ENCODE measurements at regions of chr19 and their contacts with region 1.

Region 1: DNA sequence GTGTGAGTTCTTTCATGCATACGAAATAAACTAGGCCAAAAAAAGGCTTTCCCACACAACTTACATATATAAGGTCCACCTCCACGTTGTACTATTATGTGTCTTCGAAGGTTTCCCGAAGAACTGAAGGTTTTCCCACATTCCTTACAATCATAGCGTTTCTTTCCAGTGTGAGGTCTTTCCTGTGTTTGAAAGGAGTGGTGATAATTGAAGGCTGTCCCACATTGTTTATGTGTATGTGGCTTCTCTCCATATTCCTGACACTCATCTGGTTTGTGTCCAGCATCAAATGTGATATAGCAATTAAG is 14.6 kb downstream of the ZNF442 start:
- DNase-seq: no peak

Region 2: DNA sequence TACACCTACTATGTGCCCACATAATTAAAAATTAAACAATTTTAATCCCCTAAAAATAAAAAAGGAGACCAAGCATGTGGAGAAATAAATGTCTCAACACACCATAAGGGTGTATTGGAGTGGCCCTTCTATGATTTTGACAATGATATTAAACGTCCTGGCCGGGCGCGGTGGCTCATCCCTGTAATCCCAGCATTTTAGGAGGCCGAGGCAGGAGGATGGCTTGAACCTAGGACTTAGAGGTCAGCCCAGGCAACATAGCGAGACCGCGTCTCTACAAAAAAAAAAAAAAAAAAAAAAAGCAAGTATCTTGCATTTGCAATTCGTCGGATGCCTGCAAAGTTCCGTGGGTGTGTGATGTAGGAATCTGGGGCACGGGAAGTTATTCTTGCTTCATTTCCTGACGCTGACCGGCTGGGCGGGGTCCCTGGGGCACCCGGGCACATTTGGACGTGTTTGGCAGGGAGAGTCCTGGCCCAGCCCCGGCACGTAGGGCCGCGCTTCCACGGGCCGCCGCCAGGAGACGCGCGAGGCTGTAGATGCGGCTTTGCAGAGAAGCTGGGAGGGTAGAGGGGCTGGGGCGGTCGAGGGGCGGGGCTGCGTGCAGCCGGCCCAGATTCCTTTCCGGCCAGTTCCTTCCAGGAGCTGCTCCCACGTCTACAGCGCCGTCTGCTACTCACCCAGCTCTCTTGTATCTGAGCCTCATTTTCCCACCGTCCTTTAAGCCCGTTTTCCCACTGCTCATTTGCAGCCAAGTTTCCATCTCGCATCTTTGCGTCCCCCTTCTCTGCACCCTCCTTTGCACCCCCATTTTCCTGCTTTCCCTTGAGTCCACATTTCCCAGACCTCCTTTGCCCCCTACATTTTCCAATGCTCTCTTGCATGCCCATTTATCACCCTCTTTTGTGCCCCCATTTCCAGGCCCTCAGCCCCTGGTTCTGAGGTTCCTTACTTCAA is 1057.1 kb before region 1 on chr19:
- intact Hi-C with region 1: no loop called
- DNase-seq: peak; percentile 99

Region 3: DNA sequence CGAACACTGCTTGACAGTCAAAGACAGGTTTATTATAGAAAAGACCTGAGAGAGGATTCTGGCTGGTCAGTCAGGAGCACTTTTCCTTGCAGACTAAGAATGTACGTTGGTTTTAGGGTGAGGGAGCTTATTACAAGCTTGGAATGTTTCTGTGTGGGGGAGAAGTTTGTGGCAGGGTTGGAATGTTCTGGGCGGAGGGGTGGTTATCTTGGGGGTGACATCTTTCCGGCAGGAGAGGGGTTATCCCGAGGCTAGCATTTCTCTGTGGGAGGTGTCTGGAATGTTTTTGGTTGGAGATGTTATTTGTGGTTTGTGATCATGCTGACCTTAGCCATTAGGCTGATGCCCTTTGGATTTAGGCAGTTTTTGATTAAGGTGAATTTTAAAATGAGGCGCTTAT is 126.2 kb before region 1 on chr19:
- intact Hi-C with region 1: loop called in 1 of 2 experiments (anchors 10 kb)
- DNase-seq: no peak